ENCODE measurements at regions of chr3 and their contacts with region 1.

Region 1: DNA sequence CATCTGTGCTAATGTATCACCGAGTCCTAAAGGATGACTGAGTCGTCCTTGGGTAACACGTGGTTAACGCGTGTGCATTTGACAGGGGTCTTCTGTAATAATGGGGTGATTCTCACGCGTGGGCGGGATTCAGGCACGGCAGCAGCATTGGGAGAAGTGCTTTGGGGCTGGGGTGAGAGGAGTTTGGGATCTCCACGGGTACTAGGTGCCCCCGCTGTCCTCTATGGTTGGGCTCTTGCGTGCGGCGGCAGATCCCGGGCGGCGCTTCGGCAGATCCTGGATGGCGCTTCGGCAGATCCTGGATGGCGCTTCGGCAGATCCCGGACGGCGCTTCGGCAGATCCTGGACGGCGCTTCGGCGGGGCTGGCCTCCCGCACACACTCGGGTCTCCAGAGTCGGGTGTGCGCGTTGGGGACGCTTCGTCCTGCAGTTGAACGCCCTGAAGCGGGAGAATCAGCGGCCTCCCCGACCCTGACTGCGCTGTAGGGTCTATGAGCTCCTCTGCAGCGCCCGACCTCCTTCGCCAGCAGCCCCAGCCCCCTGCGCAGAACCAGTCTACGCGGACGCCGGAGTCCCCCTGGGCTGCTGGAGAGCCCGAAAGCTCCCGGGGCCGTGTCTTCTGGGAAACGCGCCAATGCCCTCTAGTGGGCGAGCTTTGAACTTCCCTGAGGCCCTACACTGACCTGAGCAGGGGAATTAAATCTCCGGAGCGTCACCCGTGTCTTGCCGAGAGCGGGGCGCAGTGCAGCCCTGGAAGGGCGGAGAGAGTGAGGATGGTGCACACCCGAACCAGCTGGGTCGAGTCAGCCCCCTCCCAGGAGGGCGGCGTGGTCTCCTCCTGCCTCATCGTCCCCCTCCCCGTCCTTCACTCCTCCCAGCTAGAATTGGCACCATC is 48.1 kb upstream of the EPHB3 start:
- DNase-seq: peak; percentile 67 to 86 (median 71)
- H3K4me3 ChIP-seq: no peak overlapping the region
- H3K4me3 Mint-ChIP-seq: peak overlapping the region in 6 of 7 donors; percentile 9 to 74 (median 56)
- H3K27ac ChIP-seq: no peak overlapping the region
- H3K27ac Mint-ChIP-seq: peak overlapping the region in 1 of 8 donors; percentile 9
- H3K4me1 ChIP-seq: peaks cover 9% of the 10 kb centered on the region
- H3K4me1 Mint-ChIP-seq: peaks cover 8 to 13% (median 10%) of the 10 kb centered on the region in 3 donors
- H3K27me3 ChIP-seq: peaks cover 14% of the 10 kb centered on the region
- H3K27me3 Mint-ChIP-seq: peaks cover 42 to 85% of the 10 kb centered on the region in 2 donors

Region 2: GRCh38 chr3:184354121-184354728 is 159.3 kb before region 1 on chr3:
- CTCF ChIA-PET with region 1: interaction called, 31 read pairs
- POLR2A ChIA-PET with region 1: interaction called, 4 read pairs
- DNase-seq: peak; percentile 33 to 72 (median 52)
- H3K4me3 ChIP-seq: no peak overlapping the region
- H3K4me3 Mint-ChIP-seq: no peak overlapping the region
- H3K27ac ChIP-seq: no peak overlapping the region
- H3K27ac Mint-ChIP-seq: peak overlapping the region in 1 of 8 donors; percentile 38
- H3K4me1 ChIP-seq: peaks cover 4% of the 10 kb centered on the region
- H3K4me1 Mint-ChIP-seq: peaks cover 0 to 6% (median 0%) of the 10 kb centered on the region in 3 donors
- H3K27me3 ChIP-seq: no peaks in the 10 kb centered on the region
- H3K27me3 Mint-ChIP-seq: no peaks in the 10 kb centered on the region

Region 3: DNA sequence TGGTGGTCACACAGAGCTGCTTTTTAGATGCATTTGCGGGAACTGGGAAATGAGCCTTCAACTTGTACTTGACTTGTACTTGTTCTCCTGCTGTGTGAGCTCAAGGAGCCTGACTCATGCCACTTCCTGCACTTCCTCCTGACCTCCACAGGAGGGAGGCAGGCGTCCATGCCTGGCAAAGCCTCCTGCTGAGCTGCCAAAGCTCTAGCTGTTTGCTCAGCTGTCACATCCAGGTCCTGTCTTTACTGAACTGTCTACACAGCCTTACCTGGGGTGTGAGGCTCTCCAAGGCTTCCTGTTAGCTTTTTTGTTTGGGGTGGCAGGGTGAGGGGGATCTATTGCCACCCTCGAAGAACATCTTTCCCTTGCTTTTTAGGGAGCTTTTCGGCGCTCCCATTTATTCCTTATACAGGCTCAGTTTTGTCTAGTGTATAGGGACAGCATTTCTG is 141.9 kb before region 1 on chr3:
- CTCF ChIA-PET with region 1: interaction called, 22 read pairs
- POLR2A ChIA-PET with region 1: no interaction called
- DNase-seq: peak; percentile 18 to 72 (median 39)
- H3K4me3 ChIP-seq: no peak overlapping the region
- H3K4me3 Mint-ChIP-seq: peak overlapping the region in 1 of 7 donors; percentile 14
- H3K27ac ChIP-seq: no peak overlapping the region
- H3K27ac Mint-ChIP-seq: peak overlapping the region in 2 of 8 donors; percentile 1 to 43
- H3K4me1 ChIP-seq: no peaks in the 10 kb centered on the region
- H3K4me1 Mint-ChIP-seq: peaks cover 3 to 10% (median 7%) of the 10 kb centered on the region in 3 donors
- H3K27me3 ChIP-seq: no peaks in the 10 kb centered on the region
- H3K27me3 Mint-ChIP-seq: peaks cover 7 to 17% of the 10 kb centered on the region in 2 donors

Region 4: DNA sequence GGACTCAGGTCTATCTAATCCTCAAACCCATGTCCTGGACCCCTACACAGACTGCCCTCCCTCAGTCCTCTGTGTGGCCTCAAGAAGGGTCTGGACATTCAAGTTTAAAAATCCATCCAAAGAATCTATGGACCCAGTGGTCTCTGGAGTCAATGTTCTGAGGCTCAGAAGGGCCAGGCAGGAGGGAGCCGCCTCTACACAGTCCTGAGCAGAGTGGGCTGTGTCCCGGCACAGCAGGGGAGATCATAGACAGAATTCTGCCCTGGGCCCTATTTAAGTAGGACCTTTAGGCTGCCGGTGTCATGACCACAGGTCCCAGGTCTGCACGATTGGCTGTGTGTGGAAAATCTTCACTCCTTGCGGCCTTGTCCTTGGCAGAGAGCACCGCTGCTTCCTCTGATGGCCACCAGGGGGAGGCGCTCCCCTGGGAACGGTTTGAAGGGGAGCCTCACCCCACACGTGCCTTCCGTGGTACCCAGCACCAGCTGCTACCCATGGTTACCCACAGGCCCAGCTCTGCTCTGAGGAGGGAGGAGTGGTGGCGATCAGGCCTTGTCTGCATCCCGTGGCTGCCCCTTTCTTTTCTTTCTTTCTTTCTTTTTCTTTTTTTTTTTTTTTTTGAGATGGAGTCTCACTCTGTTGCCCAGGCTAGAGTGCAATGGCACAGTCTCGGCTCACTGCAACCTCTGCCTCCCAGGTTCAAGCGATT is 95.8 kb before region 1 on chr3:
- CTCF ChIA-PET with region 1: interaction called, 18 read pairs
- POLR2A ChIA-PET with region 1: no interaction called
- DNase-seq: peak; percentile 42 to 68 (median 44)
- H3K4me3 ChIP-seq: no peak overlapping the region
- H3K4me3 Mint-ChIP-seq: no peak overlapping the region
- H3K27ac ChIP-seq: no peak overlapping the region
- H3K27ac Mint-ChIP-seq: no peak overlapping the region
- H3K4me1 ChIP-seq: no peaks in the 10 kb centered on the region
- H3K4me1 Mint-ChIP-seq: peaks cover 0 to 2% (median 0%) of the 10 kb centered on the region in 3 donors
- H3K27me3 ChIP-seq: no peaks in the 10 kb centered on the region
- H3K27me3 Mint-ChIP-seq: peaks cover 2 to 5% of the 10 kb centered on the region in 2 donors

Region 5: GRCh38 chr3:184523825-184524615 is 10.5 kb after region 1 on chr3:
- CTCF ChIA-PET with region 1: interaction called, 33 read pairs
- POLR2A ChIA-PET with region 1: no interaction called
- DNase-seq: no peak
- H3K4me3 ChIP-seq: no peak overlapping the region
- H3K4me3 Mint-ChIP-seq: peak overlapping the region in 1 of 7 donors; percentile 6
- H3K27ac ChIP-seq: no peak overlapping the region
- H3K27ac Mint-ChIP-seq: no peak overlapping the region
- H3K4me1 ChIP-seq: peaks cover 8% of the 10 kb centered on the region
- H3K4me1 Mint-ChIP-seq: peaks cover 7 to 14% (median 10%) of the 10 kb centered on the region in 3 donors
- H3K27me3 ChIP-seq: peaks cover 15% of the 10 kb centered on the region
- H3K27me3 Mint-ChIP-seq: peaks cover 37 to 63% of the 10 kb centered on the region in 2 donors

Region 6: DNA sequence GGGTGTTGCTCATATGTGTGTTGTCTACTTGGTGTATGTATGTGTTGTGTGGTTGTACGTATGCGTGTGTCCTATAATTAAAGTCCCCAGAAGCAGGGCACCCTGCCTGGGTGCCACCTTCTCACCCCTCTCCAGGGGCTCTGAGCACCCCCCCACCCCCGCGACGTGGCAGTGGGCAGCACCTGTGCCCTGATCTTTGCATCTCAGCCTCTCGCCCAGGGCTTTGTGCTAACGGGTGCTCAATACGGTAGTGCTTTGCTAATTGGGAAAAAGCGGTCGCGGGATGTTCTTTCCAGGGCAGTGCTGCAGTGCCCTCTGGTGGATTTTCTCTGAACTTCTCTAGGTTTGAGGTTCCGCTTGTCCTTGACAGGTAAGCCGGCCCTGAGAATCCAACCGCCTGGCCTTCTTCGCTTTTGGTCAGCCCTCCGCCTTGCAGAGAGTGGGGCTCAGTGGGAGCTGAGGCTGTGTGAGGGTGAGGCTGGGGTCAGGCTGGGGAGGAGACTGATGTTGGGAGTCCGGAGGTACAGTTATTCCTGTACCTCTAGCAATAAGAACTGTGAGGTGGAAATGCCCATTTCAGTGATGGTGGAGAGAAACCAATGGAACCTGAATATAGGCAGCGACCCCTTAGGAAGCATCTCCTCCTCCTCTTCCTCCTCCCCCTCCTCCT is 30.5 kb after region 1 on chr3:
- CTCF ChIA-PET with region 1: interaction called, 12 read pairs
- POLR2A ChIA-PET with region 1: no interaction called
- DNase-seq: peak; percentile 38 to 78 (median 61)
- H3K4me3 ChIP-seq: no peak overlapping the region
- H3K4me3 Mint-ChIP-seq: peak overlapping the region in 3 of 7 donors; percentile 13 to 32 (median 23)
- H3K27ac ChIP-seq: no peak overlapping the region
- H3K27ac Mint-ChIP-seq: peak overlapping the region in 3 of 8 donors; percentile 14 to 93 (median 47)
- H3K4me1 ChIP-seq: peaks cover 9% of the 10 kb centered on the region
- H3K4me1 Mint-ChIP-seq: peaks cover 8 to 12% (median 8%) of the 10 kb centered on the region in 3 donors
- H3K27me3 ChIP-seq: peaks cover 4% of the 10 kb centered on the region
- H3K27me3 Mint-ChIP-seq: peaks cover 17 to 54% of the 10 kb centered on the region in 2 donors

Region 7: DNA sequence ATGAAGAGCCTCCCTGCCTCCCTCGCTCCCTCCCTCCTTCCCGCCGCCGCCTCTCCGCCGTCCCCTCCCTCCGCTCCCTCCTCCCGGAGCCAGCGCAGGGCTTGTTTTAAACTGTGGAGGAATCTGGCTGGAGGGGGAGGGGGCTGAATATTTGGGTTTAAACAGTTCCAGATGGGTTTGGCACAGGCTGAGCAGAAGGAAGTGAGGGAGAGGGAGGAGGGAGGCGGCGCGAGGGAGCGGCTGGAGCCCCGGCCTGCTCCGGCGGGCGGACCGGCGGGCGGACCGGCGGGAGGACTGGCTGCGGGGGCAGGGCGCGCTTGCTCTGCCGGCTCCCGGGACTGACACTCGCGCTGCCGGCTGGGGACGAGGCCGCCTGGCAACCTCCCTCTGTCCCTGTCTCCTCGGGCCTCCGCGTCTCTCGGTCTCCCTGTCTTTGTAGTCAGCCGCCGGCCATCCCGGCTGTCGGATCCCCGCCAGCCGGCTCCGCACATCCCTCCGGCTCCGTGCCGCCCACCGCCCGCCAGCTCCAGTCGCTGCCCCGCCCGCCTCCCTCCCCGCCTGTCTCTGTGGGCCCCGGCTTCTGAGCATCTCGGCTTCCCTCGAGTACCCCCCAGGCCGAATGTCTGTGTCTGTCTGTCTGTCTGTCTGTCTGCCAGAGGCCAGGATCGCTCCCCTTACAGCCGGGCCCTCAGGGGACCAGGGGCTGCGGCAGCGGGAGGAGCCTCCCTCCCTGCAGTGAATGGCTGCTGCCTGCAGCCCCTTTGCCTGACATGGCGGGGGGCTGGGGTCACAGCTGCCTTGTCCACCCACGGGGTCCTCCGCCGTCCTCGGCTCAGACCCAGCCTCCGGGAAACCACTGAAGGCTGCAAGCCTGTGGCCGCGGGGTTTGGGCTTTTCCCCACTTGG is 55.7 kb after region 1 on chr3:
- CTCF ChIA-PET with region 1: no interaction called
- POLR2A ChIA-PET with region 1: no interaction called
- DNase-seq: no peak
- H3K4me3 ChIP-seq: no peak overlapping the region
- H3K4me3 Mint-ChIP-seq: peak overlapping the region in 2 of 7 donors; percentile 4 to 50
- H3K27ac ChIP-seq: no peak overlapping the region
- H3K27ac Mint-ChIP-seq: no peak overlapping the region
- H3K4me1 ChIP-seq: no peaks in the 10 kb centered on the region
- H3K4me1 Mint-ChIP-seq: peaks cover 0 to 17% (median 2%) of the 10 kb centered on the region in 3 donors
- H3K27me3 ChIP-seq: peaks cover 21% of the 10 kb centered on the region
- H3K27me3 Mint-ChIP-seq: peaks cover 36 to 69% of the 10 kb centered on the region in 2 donors

Measured in CD8-positive, alpha-beta memory T cell (primary cell).